ENCODE measurements at regions of chr3 and their contacts with region 1.

Region 1: GRCh38 chr3:168156479-168156878 is 60.8 kb upstream of the GOLIM4 start:
- DNase-seq: no peak
- H3K4me3 ChIP-seq: no peak overlapping the region
- H3K4me1 ChIP-seq: no peaks in the 10 kb centered on the region
- H3K27me3 ChIP-seq: no peaks in the 10 kb centered on the region

Region 2: GRCh38 chr3:167456157-167456799 is 700.2 kb before region 1 on chr3:
- in situ Hi-C with region 1: no loop called
- DNase-seq: no peak
- H3K4me3 ChIP-seq: no peak overlapping the region
- H3K4me1 ChIP-seq: peaks cover 4% of the 10 kb centered on the region; the same call in 1 of the 2 replicates
- H3K27me3 ChIP-seq: no peaks in the 10 kb centered on the region

Region 3: DNA sequence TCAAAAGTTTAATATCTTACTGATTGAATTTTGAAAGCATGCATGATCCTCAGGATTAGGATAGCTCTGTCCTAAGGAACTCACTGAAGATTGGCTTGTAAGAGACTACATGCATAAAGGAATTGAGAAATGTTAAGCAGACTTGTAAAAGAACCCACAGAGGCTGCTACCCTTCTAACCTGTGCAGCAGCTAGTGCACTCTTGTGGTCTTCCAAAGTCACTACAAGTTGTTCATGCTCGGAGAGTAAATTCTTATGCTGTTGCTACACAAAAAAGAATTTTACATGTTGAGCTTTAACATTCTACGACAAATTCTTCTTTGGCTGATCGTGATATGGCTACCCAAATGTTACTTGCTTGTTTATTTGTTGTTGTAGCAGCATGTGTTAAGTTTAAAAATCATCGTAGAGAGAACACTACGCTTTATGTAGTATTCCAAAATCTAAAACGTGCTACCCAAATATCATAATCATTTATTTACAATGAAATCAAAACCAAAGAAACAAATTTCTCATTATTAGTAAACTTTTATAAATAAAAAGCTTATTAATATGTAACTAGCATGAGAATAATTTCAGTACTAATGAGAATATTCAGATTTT is 115.8 kb before region 1 on chr3:
- in situ Hi-C with region 1: loop called (anchors 5 kb)
- DNase-seq: peak; percentile 48 to 70
- H3K4me3 ChIP-seq: no peak overlapping the region
- H3K4me1 ChIP-seq: 0 out of 2 replicates have a peak, but pooled peaks cover 2% of the 10 kb centered on the region
- H3K27me3 ChIP-seq: no peaks in the 10 kb centered on the region

Region 4: GRCh38 chr3:168285506-168285905 is 129.0 kb after region 1 on chr3:
- in situ Hi-C with region 1: no loop called
- DNase-seq: no peak
- H3K4me3 ChIP-seq: no peak overlapping the region
- H3K4me1 ChIP-seq: peaks cover 6% of the 10 kb centered on the region; the same call in 1 of the 2 replicates
- H3K27me3 ChIP-seq: no peaks in the 10 kb centered on the region

Measured in HAP-1 (cell line).